ENCODE measurements at regions of chr7 and their contacts with region 1.

Region 1: DNA sequence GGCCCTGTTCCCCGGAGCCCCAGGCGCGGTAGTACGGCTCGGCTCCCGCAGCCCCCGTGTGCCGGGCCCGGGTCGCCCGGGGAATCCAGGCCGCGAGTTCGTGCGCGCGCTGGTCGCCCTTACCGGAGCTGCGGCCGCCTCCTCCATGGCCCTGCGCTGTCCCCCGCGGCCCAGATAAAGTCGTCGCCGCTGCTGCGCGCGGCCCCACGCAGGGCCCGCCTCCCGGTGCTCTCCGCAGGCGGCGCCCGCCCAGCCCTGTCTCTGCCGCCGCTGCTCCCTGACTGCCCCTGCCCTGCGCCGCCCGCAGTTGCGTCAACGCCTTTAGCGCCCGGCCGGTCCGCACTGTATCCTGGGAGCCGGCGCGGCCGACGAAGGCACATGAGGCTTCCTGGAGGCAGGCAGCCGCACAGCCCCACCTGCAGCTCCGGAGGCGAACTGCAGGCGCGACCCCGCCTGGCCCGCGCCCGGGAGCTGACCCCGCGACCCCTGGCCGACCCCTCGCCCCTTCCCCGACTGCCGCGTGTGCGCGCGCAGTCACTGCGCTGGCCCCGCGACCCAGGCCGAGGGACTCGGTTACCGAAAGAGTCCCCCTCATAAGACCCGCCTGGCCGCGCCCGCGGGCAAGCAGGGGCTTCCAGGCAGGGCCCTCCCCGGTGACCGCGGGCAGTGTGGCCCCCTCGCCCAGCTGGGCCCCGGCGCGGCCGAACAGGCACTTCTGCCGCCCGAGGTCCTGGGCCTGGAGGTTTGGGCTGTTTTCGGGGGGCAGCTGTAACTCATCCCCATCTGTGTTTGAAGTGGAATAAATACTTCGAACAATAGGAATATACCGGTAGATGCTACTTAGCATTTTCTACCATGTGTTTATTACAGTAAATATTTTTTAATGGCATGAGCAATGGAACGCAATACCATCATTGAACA is 127.1 kb upstream of the ZNF746 start:
- DNase-seq: peak; percentile 94
- H3K4me3 Mint-ChIP-seq: peak overlapping the region; percentile 92
- H3K27ac Mint-ChIP-seq: peak overlapping the region; percentile 89
- H3K4me1 Mint-ChIP-seq: peaks cover 42% of the 10 kb centered on the region
- H3K27me3 Mint-ChIP-seq: peaks cover 34% of the 10 kb centered on the region

Region 2: GRCh38 chr7:149500910-149501309 is 123.8 kb before region 1 on chr7:
- CTCF ChIA-PET with region 1: interaction called, 12 read pairs
- DNase-seq: no peak
- H3K4me3 Mint-ChIP-seq: no peak overlapping the region
- H3K27ac Mint-ChIP-seq: no peak overlapping the region
- H3K4me1 Mint-ChIP-seq: peaks cover 26% of the 10 kb centered on the region
- H3K27me3 Mint-ChIP-seq: peaks cover 15% of the 10 kb centered on the region

Measured in activated naive CD4-positive, alpha-beta T cell treated with anti-CD3 and anti-CD28 coated beads, Interleukin-2, amount 10 ng/mL, durations not matched to agents 7 days and 5 days (primary cell).